ENCODE measurements at regions of chr12 and their contacts with region 1.

Region 1: DNA sequence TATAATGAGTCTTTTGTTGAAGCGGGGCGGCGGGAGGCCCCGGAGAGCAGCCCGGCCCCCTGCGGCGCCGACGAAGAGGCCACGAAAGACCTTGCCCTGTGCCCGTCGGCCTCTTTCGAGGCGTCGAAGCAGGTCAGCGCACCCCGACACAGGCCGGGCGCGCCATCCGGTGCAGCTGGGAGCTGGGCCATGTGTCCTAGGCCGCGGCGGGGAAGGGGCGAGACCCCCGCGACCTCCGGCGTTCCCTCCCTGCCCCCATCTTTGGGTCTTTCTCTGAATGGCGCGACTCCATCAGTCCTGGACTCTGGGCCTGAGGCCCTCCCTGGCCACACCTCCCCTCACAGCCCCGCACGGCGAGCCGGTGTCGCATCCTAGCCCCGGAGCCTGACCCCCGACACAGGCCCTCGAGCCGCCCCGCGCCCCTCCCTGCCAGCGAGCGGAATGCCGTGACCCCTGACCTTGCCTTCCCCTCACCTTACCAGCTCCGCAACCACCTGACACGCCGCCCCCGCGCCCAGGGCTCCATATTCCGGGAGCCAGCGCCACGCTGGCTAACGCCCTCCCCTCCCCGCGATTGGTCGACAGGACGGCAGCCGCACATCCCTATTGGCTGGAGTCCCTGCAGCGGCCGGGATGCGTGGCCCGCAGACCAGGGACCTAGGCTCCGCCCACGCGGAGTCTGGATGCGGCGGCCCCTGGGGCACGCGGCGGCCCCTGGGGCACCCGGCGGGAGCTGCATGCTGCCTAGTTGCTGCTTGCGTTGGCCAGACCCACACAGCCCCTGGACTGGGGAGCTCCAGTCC is at the start of gene SLC11A2:
- DNase-seq: peak; percentile 89 to 94 (median 91)
- H3K4me3 ChIP-seq: peak within 1 kb of the TSS; percentile 79
- H3K4me3 Mint-ChIP-seq: peak within 1 kb of the TSS; percentile 89 to 99 (median 96)
- H3K27ac ChIP-seq: peak within 1 kb of the TSS; percentile 75
- H3K27ac Mint-ChIP-seq: peak within 1 kb of the TSS; percentile 73 to 99 (median 96)
- H3K4me1 ChIP-seq: peaks cover 29% of the 10 kb centered on the region
- H3K4me1 Mint-ChIP-seq: peaks cover 43 to 62% (median 55%) of the 10 kb centered on the region in 3 donors
- H3K27me3 ChIP-seq: no peaks in the 10 kb centered on the region
- H3K27me3 Mint-ChIP-seq: peaks cover 4 to 6% of the 10 kb centered on the region in 2 donors
- total RNA-seq, gene SLC11A2: 35.2 to 36.9 TPM

Region 2: DNA sequence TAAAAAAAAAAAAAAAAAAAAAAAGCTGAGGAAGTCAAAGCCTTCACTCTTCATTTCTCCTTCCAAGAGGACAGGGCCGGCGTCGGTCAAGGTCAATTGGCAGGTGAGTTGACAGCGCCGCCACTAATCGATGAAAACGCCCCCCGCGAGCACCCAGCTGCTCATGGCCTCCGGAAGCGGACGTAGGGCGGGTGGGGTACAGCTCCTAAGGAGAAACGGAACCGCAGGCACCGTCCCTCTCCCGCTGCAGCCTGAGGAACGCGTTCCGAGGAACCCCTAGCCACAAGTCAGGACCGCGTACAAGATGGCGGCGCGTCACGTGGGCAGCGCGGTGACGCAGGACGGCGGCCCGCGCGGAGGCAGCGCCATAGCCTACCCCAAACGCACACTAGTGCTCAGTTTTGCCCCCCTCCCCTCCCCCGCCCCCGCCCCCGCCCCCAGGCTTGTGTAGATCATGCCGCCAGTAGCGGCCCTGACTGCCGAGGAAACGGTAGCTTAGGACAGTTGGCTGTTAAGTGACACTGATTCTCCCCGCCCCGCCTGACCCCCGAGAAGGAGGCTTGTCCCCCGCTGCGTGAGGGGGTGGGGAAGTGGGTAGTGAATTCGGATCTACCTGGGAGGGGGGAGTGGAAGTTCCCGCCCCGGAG is 262.3 kb before region 1 on chr12 and contains the start of gene ATF1:
- CTCF ChIA-PET with region 1: interaction called, 9 read pairs
- POLR2A ChIA-PET with region 1: interaction called, 18 read pairs
- DNase-seq: peak; percentile 82 to 93 (median 89)
- H3K4me3 ChIP-seq: peak within 1 kb of the TSS; percentile 86
- H3K4me3 Mint-ChIP-seq: peak within 1 kb of the TSS; percentile 85 to 98 (median 89)
- H3K27ac ChIP-seq: peak within 1 kb of the TSS; percentile 89
- H3K27ac Mint-ChIP-seq: peak within 1 kb of the TSS; percentile 95 to 98 (median 96)
- H3K4me1 ChIP-seq: peaks cover 21% of the 10 kb centered on the region
- H3K4me1 Mint-ChIP-seq: peaks cover 26 to 49% (median 41%) of the 10 kb centered on the region in 3 donors
- H3K27me3 ChIP-seq: no peaks in the 10 kb centered on the region
- H3K27me3 Mint-ChIP-seq: peaks cover 0 to 3% of the 10 kb centered on the region in 2 donors
- total RNA-seq, gene ATF1: 50.8 to 54.0 TPM

Region 3: DNA sequence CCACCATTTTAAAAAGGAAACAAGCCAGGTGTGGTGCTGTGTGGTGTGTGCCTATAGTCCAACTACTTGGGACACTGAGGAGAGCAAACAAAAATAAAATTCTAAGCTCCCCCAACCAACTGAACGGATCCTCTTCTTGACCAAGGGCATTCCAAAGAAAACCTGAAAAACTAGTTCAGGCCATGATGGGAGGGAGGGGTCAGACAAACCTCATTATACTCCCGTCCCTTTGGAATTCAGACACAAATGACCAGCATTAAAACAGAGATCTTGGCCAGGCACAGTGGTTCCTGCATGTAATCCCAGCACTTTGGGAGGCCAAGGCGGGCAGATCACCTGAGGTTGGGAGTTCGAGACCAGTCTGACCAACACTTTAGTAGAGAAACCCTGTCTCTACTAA is 20.3 kb before region 1 on chr12:
- CTCF ChIA-PET with region 1: no interaction called
- POLR2A ChIA-PET with region 1: no interaction called
- DNase-seq: no peak
- H3K4me3 ChIP-seq: no peak overlapping the region
- H3K4me3 Mint-ChIP-seq: no peak overlapping the region
- H3K27ac ChIP-seq: no peak overlapping the region
- H3K27ac Mint-ChIP-seq: peak overlapping the region in 4 of 8 donors; percentile 15 to 73 (median 31)
- H3K4me1 ChIP-seq: peaks cover 18% of the 10 kb centered on the region
- H3K4me1 Mint-ChIP-seq: peaks cover 8 to 15% (median 10%) of the 10 kb centered on the region in 3 donors
- H3K27me3 ChIP-seq: no peaks in the 10 kb centered on the region
- H3K27me3 Mint-ChIP-seq: no peaks in the 10 kb centered on the region

Region 4: DNA sequence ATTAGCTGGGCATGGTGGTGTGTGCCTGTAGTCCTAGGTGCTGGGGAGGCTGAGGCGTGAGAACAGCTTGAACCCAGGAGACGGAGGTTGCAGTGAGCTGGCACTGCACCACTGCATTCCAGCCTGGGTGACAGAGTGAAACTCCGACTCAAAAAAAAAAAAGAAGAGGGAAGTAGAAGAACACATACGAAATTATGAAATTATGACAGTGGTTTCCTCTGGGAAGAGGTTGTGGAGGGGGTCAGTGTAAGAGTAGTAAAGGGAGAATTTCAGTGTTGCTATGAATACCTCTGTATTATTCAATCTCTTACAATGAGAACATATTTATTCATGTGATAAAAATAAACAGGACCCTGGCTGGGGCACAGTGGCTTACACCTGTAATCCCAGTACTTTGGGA is 82.1 kb after region 1 on chr12:
- CTCF ChIA-PET with region 1: no interaction called
- POLR2A ChIA-PET with region 1: no interaction called
- DNase-seq: no peak
- H3K4me3 ChIP-seq: no peak overlapping the region
- H3K4me3 Mint-ChIP-seq: no peak overlapping the region
- H3K27ac ChIP-seq: no peak overlapping the region
- H3K27ac Mint-ChIP-seq: no peak overlapping the region
- H3K4me1 ChIP-seq: no peaks in the 10 kb centered on the region
- H3K4me1 Mint-ChIP-seq: no peaks in the 10 kb centered on the region
- H3K27me3 ChIP-seq: no peaks in the 10 kb centered on the region
- H3K27me3 Mint-ChIP-seq: no peaks in the 10 kb centered on the region

Region 5: DNA sequence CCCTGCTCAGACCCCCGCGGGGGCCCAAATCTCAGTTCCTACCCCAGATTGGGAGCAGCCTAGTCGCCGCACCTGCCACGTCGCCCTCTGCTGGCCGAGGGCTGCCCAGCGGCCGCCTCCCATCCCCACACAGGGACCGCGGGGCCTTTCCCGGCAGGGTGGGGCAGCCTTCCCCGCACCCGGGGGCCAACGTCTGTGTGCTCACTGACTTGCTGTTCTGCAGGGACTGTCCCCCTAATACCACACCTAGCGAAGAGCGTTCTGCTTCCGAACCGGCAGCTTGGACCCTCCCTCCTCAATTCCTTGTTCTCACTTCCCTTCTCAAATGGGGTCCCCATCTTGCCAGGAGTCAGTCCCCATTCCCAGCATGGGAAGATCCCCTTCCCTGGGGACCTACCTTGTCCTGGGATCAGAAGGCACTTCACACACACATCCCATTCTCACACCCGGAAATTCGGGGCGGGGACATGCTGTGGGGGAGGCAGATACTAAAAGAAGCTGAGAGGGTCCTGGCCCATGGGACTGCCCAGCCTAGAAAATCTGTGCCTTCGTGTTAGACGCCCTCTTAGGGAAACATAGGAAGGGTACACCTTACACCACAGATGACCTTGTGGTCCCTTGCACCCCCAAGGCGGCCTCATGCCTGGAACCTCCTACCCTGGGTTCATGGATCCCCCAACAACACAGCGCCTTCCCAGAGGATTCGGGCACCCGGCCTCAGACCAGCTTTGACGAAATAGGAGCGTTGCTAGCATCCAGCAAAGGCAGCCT is 897.6 kb after region 1 on chr12:
- CTCF ChIA-PET with region 1: no interaction called
- POLR2A ChIA-PET with region 1: no interaction called
- DNase-seq: peak; percentile 21 to 61 (median 37)
- H3K4me3 ChIP-seq: no peak overlapping the region
- H3K4me3 Mint-ChIP-seq: peak overlapping the region in 3 of 7 donors; percentile 40 to 68 (median 53)
- H3K27ac ChIP-seq: no peak overlapping the region
- H3K27ac Mint-ChIP-seq: no peak overlapping the region
- H3K4me1 ChIP-seq: no peaks in the 10 kb centered on the region
- H3K4me1 Mint-ChIP-seq: peaks cover 0 to 6% (median 2%) of the 10 kb centered on the region in 3 donors
- H3K27me3 ChIP-seq: no peaks in the 10 kb centered on the region
- H3K27me3 Mint-ChIP-seq: peaks cover 0 to 7% of the 10 kb centered on the region in 2 donors